Psoas muscle (tissue), 8 donors: ENCODE measurements at regions of chr1 and their contacts with region 1.

Region 1: DNA sequence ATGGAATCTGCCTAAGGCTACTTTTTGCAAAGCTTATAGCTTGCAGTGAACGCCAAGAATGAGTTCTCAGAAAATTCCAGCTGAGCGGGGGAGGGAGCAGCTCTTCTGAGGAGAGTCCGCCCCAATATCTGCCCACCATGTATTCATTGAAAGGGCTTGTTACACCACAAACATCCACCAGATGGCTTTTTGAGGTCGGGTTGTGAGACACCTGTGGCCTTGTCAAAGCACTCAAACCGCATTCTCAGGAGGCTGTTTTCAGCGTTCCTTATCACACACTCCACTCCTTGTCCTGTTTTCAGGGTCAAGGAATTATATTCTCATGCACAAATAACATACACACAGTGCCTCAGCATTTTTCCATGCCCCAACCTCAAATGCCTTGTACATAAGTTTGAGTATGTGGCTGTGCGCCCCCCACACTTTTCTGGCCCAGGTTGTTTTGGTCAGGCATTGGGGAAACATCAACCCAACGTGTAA is 3.9 kb upstream of the C4BPB start:
- DNase-seq: no peak
- ATAC-seq: peak; percentile 57 to 84 (median 67)
- H3K4me3 ChIP-seq: no peak overlapping the region
- H3K27ac ChIP-seq: no peak overlapping the region
- H3K4me1 ChIP-seq: no peaks in the 10 kb centered on the region
- H3K27me3 ChIP-seq: no peaks in the 10 kb centered on the region
- CTCF ChIP-seq: peak; percentile 64

Region 2: DNA sequence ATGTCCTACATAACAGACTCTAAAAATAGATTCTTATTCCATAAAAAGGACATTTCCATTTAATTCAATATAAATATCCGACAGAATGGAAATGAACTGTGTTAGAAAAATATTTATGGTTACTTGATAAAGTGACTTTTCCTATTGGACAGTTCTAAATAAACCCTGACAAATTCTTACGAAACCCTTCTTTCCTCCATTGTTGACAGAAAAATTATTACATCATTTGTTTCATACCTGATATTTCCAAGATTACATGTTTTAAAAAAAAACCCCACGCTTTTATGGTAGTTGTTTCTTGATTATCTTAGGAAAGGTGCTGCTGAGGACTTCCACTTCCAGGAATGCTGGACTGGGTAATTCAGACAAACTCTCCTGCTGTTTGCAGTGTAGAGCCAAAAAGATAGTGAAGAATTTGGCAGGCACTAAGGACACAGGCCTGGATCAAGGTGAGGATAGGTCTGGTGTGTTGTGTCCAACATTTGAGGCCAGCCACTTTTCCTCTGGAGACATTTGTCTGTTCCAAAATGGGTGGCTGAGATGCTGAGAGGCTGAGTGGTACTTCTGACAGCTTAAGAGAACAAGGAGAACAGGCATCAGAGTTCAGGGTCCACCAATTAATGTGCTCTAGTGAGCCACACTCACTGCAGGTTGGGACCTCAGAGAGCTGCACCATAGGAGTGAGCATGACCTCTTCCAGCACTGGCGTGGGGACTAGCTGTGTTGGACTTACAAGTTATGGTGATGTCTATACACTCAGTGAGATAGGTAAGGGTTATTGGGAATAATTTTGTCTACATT is 45.2 kb before region 1 on chr1:
- intact Hi-C with region 1: no loop called
- DNase-seq: no peak
- ATAC-seq: no peak
- H3K4me3 ChIP-seq: no peak overlapping the region
- H3K27ac ChIP-seq: no peak overlapping the region
- H3K4me1 ChIP-seq: no peaks in the 10 kb centered on the region
- H3K27me3 ChIP-seq: no peaks in the 10 kb centered on the region
- CTCF ChIP-seq: no peak

Region 3: DNA sequence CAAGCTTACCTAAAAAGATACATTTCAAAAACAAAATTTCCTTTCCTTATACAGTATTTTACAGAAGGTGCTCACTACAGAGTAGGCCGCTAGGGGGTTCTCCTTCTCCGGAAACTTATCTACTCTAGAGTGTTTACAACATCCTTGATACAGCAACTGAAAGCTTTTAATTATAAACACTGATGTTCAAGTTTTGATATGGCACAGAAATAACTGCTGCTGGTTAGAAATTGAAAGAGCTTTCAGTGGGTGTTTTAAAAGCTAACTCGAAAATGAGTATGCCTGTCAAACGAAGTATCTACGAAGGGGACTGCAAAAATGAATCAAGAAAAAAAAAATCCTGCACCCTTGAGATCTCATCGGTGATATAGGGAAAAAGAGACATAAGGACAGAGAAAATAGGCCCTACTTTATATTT is 34.8 kb before region 1 on chr1:
- intact Hi-C with region 1: loop called (anchors 2 to 5 kb)
- DNase-seq: no peak
- ATAC-seq: peak in 3 of 4 donors; percentile 46 to 60 (median 50)
- H3K4me3 ChIP-seq: peak overlapping the region; percentile 94
- H3K27ac ChIP-seq: peak overlapping the region; percentile 84
- H3K4me1 ChIP-seq: peaks cover 39% of the 10 kb centered on the region
- H3K27me3 ChIP-seq: no peaks in the 10 kb centered on the region
- CTCF ChIP-seq: peak; percentile 80

Region 4: DNA sequence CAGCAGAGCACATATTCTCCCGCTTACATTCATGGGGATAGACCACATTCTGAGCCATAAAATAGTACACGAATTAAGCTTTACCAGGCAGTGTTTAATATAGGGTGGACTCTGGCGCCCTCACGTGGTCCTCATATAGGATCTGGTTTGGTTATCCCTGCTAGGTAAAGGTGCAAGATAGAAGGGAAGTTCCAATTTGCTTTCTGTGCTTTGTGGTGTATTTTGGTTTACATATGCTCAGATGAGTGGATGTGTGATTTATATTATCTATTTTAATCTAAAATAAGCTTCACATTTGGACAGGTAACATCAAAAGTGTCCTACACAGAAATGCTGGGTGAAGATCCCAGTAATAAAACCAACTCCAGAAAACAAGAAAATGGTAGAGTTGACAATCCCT is 414.8 kb after region 1 on chr1:
- intact Hi-C with region 1: loop called (anchors 1 to 5 kb)
- DNase-seq: peak; percentile 57 to 67
- ATAC-seq: peak; percentile 63 to 84 (median 68)
- H3K4me3 ChIP-seq: no peak overlapping the region
- H3K27ac ChIP-seq: no peak overlapping the region
- H3K4me1 ChIP-seq: peaks cover 3% of the 10 kb centered on the region
- H3K27me3 ChIP-seq: peaks cover 4 to 75% (median 9%) of the 10 kb centered on the region in 3 donors
- CTCF ChIP-seq: peak; percentile 73